ENCODE measurements at regions of chr10 and their contacts with region 1.

Region 1: GRCh38 chr10:125084191-125084613 is 76.2 kb downstream of the CTBP2 start:
- DNase-seq: peak; percentile 58 to 70
- H3K4me3 ChIP-seq: no peak overlapping the region
- H3K27ac ChIP-seq: no peak overlapping the region
- H3K4me1 ChIP-seq: no peaks in the 10 kb centered on the region
- H3K27me3 ChIP-seq: no peaks in the 10 kb centered on the region
- CTCF ChIP-seq: no peak

Region 2: DNA sequence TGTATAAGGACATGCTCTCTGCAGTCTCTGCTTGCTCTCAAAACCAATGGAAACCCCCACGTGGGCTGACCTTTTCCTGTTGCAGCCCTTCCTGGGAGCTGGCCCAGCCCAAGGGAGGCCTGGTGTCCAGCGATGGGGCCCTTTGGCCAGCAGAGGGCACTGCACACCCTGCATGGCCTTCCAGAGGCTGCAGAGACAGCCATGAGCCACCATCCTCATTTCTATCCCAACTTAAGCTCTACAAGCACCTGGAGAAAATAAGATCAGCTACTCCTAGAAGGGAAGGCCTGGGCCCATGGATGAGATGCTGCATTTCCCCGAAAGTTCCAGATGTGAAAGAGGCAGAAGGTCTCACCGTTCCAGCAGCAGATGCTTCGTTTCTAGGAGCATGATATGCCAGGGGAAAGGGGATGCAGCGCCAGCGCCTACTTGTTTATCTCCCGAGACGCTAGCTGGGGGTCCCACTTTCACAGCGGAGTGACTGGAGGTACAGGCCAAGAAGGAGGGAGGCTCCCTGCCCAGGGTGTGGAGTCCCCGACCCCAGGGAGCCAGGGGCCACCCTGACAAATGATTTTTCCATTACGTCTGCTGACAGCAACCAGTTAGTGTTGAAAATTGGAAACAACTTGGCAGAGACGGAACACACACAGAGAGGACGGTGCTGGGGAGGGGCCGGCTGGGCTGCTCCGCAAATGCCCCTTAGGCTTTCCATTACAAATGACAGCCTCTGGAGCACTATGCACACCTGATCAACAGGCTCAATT is 35.9 kb before region 1 on chr10:
- CTCF ChIA-PET with region 1: no interaction called
- POLR2A ChIA-PET with region 1: no interaction called
- intact Hi-C with region 1: no loop called
- DNase-seq: peak; percentile 44 to 72
- H3K4me3 ChIP-seq: no peak overlapping the region
- H3K27ac ChIP-seq: no peak overlapping the region
- H3K4me1 ChIP-seq: peaks cover 32% of the 10 kb centered on the region
- H3K27me3 ChIP-seq: no peaks in the 10 kb centered on the region
- CTCF ChIP-seq: peak; percentile 85

Region 3: DNA sequence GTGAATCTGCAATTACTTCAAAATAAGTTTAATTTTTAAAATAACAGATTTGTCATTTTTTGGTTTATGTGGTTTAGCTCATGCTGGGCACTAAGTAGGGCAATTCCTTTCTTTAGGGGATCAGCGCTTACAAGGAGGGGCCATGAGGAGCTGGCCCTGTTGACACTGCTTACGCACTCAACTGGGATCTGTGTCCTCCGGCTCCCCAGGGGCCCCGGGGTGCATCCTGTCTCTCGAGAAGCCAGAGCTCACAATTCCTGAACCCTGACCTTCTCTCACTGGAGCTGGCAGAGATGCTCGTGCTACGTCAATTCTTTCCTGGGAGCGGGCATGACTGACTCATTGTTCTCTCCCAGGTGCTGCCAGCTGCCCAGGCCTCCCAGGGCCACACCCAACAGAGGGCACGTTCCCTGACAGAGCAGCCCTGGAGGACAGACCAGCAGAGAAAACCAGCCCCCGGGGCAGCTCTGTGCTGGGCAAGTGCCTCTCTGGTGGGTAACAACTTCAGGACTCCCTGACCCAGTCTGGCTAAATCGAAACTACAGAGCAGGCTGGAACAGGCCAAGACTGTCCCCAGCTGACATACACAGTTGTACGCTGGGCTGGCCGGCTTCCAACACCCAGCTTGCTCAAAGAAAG is 39.4 kb after region 1 on chr10:
- CTCF ChIA-PET with region 1: no interaction called
- POLR2A ChIA-PET with region 1: interaction called, 7 read pairs
- intact Hi-C with region 1: loop called (anchors 2 kb)
- DNase-seq: peak; percentile 84 to 89
- H3K4me3 ChIP-seq: no peak overlapping the region
- H3K27ac ChIP-seq: peak overlapping the region; percentile 82
- H3K4me1 ChIP-seq: peaks cover 26% of the 10 kb centered on the region
- H3K27me3 ChIP-seq: no peaks in the 10 kb centered on the region
- CTCF ChIP-seq: no peak

Region 4: DNA sequence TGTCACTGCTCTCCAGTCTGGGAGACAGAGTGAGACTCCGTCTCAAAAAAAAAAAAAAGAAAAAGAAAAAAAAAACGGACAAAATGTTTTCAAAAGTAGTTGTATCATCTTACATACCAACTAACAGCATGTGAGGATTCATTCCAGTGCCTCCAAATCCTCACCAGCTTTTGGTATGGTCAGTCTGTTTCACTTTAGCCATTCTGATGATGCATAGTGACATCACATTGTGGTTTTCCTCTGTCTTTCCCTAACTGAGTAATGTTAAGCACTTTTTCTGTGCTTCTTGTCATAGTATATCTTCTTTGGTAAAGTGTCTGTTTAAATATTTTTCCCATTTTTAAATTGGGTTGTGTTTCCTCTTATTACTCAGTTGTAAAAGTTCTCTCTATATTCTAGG is 327.5 kb after region 1 on chr10:
- CTCF ChIA-PET with region 1: no interaction called
- POLR2A ChIA-PET with region 1: no interaction called
- intact Hi-C with region 1: no loop called
- DNase-seq: peak in 1 of 2 experiments; percentile 60
- H3K4me3 ChIP-seq: no peak overlapping the region
- H3K27ac ChIP-seq: no peak overlapping the region
- H3K4me1 ChIP-seq: peaks cover 16% of the 10 kb centered on the region
- H3K27me3 ChIP-seq: no peaks in the 10 kb centered on the region
- CTCF ChIP-seq: no peak

Measured in PC-9 (cell line).